Activated CD4-positive, alpha-beta T cell treated with anti-CD3 and anti-CD28 coated beads, Interleukin-2, amount 10 ng/mL, durations not matched to agents 24 days and 14 days (primary cell): ENCODE measurements at regions of chr3 and their contacts with region 1.

Region 1: DNA sequence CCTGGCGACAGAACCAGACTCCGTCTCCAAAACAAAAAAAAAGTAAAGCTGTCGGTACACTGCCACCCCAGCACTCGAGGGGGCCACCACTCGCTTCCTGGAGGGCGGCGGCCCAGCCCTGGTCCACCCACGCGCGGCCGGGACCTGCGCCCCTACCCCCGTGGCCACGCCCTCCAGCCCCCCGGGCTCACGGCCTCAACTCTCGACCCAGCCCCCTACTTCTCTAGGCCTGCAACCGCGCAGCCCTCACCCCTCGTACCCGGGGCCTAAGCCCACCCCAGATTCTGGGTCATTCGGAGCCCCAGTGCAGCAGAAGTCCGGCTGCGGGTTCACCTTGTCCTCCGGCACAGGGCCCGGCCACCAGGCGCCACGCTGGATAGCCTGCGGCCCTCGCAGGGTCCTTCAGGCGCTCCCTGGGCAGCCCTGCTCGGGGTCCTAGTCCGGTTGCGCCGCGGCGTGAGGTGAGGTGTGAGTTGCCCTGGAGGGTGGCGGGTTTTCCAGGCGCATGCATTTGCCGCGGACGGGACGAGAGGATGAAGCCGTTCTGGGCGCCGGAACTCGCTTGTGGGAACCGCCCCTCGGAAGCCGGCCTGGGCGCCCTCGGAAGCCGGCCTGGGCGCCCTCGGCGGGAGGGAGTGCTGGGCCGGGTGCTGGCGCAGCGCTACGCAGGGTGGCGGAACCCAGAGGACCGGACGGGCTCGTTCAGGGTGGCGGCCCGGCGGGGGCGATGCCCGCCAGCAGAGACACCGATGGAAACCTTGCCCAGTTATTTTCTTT is 32.3 kb downstream of the SPINK8 start:
- DNase-seq: peak; percentile 97
- H3K4me3 Mint-ChIP-seq: peak within 1 kb of the TSS; percentile 96
- H3K27ac Mint-ChIP-seq: peak within 1 kb of the TSS; percentile 99
- H3K4me1 Mint-ChIP-seq: peaks cover 23% of the 10 kb centered on the region
- H3K27me3 Mint-ChIP-seq: peaks cover 14% of the 10 kb centered on the region

Region 2: GRCh38 chr3:48240711-48241491 is 60.3 kb before region 1 on chr3 and contains the start of gene ZNF589:
- intact Hi-C with region 1: loop called (anchors 1 kb)
- DNase-seq: peak; percentile 98
- H3K4me3 Mint-ChIP-seq: peak within 1 kb of the TSS; percentile 90
- H3K27ac Mint-ChIP-seq: peak within 1 kb of the TSS; percentile 94
- H3K4me1 Mint-ChIP-seq: peaks cover 20% of the 10 kb centered on the region
- H3K27me3 Mint-ChIP-seq: no peaks in the 10 kb centered on the region
- total RNA-seq, gene ZNF589: 38.1 and 39.9 TPM in 2 replicates

Region 3: GRCh38 chr3:48268381-48269183 is 32.6 kb before region 1 on chr3:
- intact Hi-C with region 1: loop called (anchors 1 kb)
- DNase-seq: peak; percentile 92
- H3K4me3 Mint-ChIP-seq: peak overlapping the region; percentile 73
- H3K27ac Mint-ChIP-seq: peak overlapping the region; percentile 96
- H3K4me1 Mint-ChIP-seq: peaks cover 37% of the 10 kb centered on the region
- H3K27me3 Mint-ChIP-seq: no peaks in the 10 kb centered on the region

Region 4: GRCh38 chr3:48716982-48717746 is 416.0 kb after region 1 on chr3 and contains the start of gene IP6K2:
- intact Hi-C with region 1: loop called (anchors 5 kb)
- DNase-seq: peak; percentile 100
- H3K4me3 Mint-ChIP-seq: peak within 1 kb of the TSS; percentile 98
- H3K27ac Mint-ChIP-seq: peak within 1 kb of the TSS; percentile 98
- H3K4me1 Mint-ChIP-seq: peaks cover 29% of the 10 kb centered on the region
- H3K27me3 Mint-ChIP-seq: peaks cover 22% of the 10 kb centered on the region
- total RNA-seq, gene IP6K2: 57.9 and 58.4 TPM in 2 replicates